Endothelial cell of umbilical vein (primary cell): ENCODE measurements at regions of chr11 and their contacts with region 1.

Region 1: GRCh38 chr11:76380967-76381719 is at the starts of genes GVQW3 and THAP12:
- DNase-seq: peak; percentile 99
- H3K4me3 ChIP-seq: peak within 1 kb of the TSS; percentile 71 to 89 (median 82)
- H3K27ac ChIP-seq: peak within 1 kb of the TSS; percentile 27
- H3K4me1 ChIP-seq: peaks cover 18% of the 10 kb centered on the region
- H3K27me3 ChIP-seq: no peaks in the 10 kb centered on the region
- CTCF ChIP-seq: peak; percentile 7 to 8
- POLR2A ChIP-seq: peak; percentile 82
- total RNA-seq, gene GVQW3: 0.99 and 2.8 TPM in 2 replicates
- total RNA-seq, gene THAP12: 32.3 and 36.7 TPM in 2 replicates

Region 2: DNA sequence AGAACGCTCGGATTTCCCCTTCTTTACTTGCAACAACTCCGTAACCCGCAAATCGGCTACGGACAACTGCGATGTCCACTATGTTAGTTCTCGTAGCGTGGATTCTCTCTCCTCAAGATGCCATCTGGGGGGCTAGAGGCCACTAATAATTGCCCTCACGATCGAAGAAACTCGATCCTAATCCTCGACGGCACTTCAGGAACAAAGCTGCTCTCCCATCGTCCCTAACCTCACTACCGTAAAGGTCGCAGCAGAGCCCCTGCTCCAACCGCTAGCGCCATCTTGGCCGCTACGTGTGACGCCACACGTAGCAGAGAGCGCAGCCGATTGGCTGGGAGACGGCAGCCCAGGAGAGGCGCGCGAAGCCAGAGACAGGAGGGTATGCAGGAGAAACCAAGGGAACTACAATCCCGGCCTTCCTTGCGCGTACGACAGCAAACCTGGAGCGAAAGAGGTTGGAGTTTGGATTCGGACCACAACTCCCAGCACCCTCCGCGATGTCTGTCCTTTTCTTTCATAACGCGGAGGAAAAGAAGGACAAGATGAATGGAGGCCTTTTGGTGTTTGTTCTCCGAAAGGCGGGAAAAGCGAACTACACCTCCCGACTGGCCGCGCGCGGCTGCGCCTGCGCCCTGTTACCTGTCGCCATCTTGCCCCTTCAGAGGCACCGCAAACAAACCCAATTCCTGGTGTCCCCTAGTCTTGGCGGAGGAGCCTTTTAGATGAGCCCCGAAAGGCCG is 63.4 kb after region 1 on chr11 and contains the start of gene EMSY:
- CTCF ChIA-PET with region 1: no interaction called
- POLR2A ChIA-PET with region 1: no interaction called
- dilution Hi-C with region 1: no loop called
- intact Hi-C with region 1: loop called (anchors 1 kb)
- DNase-seq: peak; percentile 100
- H3K4me3 ChIP-seq: peak within 1 kb of the TSS; percentile 83 to 96 (median 89)
- H3K27ac ChIP-seq: peak within 1 kb of the TSS; percentile 94
- H3K4me1 ChIP-seq: peaks cover 12% of the 10 kb centered on the region
- H3K27me3 ChIP-seq: no peaks in the 10 kb centered on the region
- CTCF ChIP-seq: no peak
- POLR2A ChIP-seq: peak; percentile 98
- total RNA-seq, gene EMSY: 23.4 and 25.7 TPM in 2 replicates